MCF 10A (cell line): ENCODE measurements at regions of chr5 and their contacts with region 1.

Region 1: DNA sequence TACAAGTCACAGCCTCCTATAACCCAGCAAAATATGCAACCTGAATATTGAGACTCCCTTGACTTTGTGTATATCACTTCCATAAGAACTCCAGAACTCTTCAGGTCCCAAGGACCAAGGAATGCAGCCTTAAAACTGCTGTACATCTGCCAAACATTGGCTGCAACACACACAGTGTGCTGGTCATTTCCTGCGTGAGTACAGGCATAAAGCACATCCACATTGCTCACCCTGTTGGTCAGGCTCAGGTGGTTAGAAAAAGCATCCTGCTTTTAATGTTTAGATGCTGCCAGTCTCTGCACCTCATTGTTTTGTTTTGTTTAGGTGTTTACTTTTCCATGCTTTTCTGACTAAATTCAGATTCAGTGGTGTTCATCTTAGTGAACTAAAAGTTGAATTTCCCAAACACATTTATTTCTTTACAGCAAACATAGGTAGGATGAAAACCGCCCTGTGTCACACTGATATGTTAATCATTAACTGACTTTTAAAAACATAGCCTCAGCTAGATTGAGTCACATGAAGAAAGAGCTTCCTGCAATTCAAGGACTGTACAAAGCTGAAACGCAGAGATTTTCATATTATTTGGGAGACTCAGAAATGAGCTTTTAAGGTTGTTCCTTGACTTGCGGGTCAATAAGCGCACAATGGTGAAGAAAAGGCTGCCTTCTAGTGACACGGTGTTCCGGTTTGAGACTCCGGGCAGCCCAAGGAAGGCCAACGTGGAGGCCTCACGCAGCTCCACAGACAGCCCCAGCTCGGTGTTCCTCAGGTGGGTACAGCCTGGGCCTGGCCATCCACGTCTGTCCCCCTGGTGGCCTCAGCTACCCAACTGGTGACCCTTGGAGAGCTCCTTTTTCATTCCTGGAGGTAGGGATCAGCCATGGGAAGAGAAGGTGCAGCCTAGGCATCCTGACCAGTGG is 52.2 kb upstream of the GRAMD2B start:
- DNase-seq: peak; percentile 50
- H3K4me3 Mint-ChIP-seq: no peak overlapping the region
- H3K27ac Mint-ChIP-seq: no peak overlapping the region
- H3K4me1 Mint-ChIP-seq: peaks cover 27% of the 10 kb centered on the region
- H3K27me3 Mint-ChIP-seq: no peaks in the 10 kb centered on the region
- CTCF ChIP-seq: peak; percentile 7

Region 2: GRCh38 chr5:126433701-126434100 is 62.6 kb after region 1 on chr5:
- CTCF ChIA-PET with region 1: interaction called, 4 read pairs
- POLR2A ChIA-PET with region 1: interaction called, 13 read pairs
- intact Hi-C with region 1: no loop called
- DNase-seq: no peak
- H3K4me3 Mint-ChIP-seq: peak overlapping the region; percentile 8
- H3K27ac Mint-ChIP-seq: peak overlapping the region; percentile 80
- H3K4me1 Mint-ChIP-seq: peaks cover 40% of the 10 kb centered on the region
- H3K27me3 Mint-ChIP-seq: no peaks in the 10 kb centered on the region
- CTCF ChIP-seq: no peak